CD8-positive, alpha-beta T cell (primary cell): ENCODE measurements at regions of chr12 and their contacts with region 1.

Region 1: GRCh38 chr12:44709166-44709565 is 166.9 kb downstream of the NELL2 start:
- DNase-seq: no peak
- ATAC-seq: no peak
- H3K4me3 ChIP-seq: no peak overlapping the region
- H3K4me3 Mint-ChIP-seq: no peak overlapping the region
- H3K27ac ChIP-seq: no peak overlapping the region
- H3K27ac Mint-ChIP-seq: no peak overlapping the region
- H3K4me1 ChIP-seq: no peaks in the 10 kb centered on the region
- H3K4me1 Mint-ChIP-seq: peaks cover 22% of the 10 kb centered on the region
- H3K27me3 ChIP-seq: no peaks in the 10 kb centered on the region
- H3K27me3 Mint-ChIP-seq: no peaks in the 10 kb centered on the region
- CTCF ChIP-seq: no peak

Region 2: GRCh38 chr12:44720265-44720664 is 11.1 kb after region 1 on chr12:
- CTCF ChIA-PET with region 1: interaction called, 3 read pairs
- POLR2A ChIA-PET with region 1: no interaction called
- intact Hi-C with region 1: loop called in 1 of 2 experiments (anchors 2 kb)
- DNase-seq: no peak
- ATAC-seq: no peak
- H3K4me3 ChIP-seq: no peak overlapping the region
- H3K4me3 Mint-ChIP-seq: no peak overlapping the region
- H3K27ac ChIP-seq: no peak overlapping the region
- H3K27ac Mint-ChIP-seq: peak overlapping the region; percentile 52
- H3K4me1 ChIP-seq: peaks cover 26% of the 10 kb centered on the region
- H3K4me1 Mint-ChIP-seq: peaks cover 74% of the 10 kb centered on the region
- H3K27me3 ChIP-seq: no peaks in the 10 kb centered on the region
- H3K27me3 Mint-ChIP-seq: no peaks in the 10 kb centered on the region
- CTCF ChIP-seq: no peak

Region 3: DNA sequence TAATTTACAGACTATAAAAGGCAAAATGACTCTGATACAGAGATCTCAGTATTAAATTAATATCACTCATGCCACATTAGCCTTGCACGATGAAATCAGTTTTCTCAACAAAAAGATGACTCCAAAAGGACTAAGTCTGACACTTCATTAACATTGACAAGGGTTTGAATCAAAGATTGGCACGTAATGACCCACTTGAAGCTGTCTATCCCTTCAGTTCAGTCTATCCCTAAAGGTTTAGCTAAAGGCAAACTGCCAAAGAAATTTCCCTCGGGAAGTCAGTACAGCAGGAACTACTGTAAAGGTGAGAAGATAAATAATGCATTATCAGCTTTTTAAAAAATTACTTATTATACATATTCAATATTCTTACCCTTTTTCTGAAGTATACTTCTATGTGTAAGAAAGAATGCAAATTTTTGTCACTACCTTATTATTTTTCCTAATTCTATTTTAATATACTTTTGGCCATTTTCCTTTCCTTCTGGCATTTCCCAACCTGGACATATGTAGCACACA is 39.8 kb after region 1 on chr12:
- CTCF ChIA-PET with region 1: no interaction called
- POLR2A ChIA-PET with region 1: no interaction called
- intact Hi-C with region 1: no loop called
- DNase-seq: no peak
- ATAC-seq: no peak
- H3K4me3 ChIP-seq: no peak overlapping the region
- H3K4me3 Mint-ChIP-seq: no peak overlapping the region
- H3K27ac ChIP-seq: no peak overlapping the region
- H3K27ac Mint-ChIP-seq: no peak overlapping the region
- H3K4me1 ChIP-seq: peaks cover 15% of the 10 kb centered on the region
- H3K4me1 Mint-ChIP-seq: peaks cover 43% of the 10 kb centered on the region
- H3K27me3 ChIP-seq: no peaks in the 10 kb centered on the region
- H3K27me3 Mint-ChIP-seq: no peaks in the 10 kb centered on the region
- CTCF ChIP-seq: no peak

Region 4: DNA sequence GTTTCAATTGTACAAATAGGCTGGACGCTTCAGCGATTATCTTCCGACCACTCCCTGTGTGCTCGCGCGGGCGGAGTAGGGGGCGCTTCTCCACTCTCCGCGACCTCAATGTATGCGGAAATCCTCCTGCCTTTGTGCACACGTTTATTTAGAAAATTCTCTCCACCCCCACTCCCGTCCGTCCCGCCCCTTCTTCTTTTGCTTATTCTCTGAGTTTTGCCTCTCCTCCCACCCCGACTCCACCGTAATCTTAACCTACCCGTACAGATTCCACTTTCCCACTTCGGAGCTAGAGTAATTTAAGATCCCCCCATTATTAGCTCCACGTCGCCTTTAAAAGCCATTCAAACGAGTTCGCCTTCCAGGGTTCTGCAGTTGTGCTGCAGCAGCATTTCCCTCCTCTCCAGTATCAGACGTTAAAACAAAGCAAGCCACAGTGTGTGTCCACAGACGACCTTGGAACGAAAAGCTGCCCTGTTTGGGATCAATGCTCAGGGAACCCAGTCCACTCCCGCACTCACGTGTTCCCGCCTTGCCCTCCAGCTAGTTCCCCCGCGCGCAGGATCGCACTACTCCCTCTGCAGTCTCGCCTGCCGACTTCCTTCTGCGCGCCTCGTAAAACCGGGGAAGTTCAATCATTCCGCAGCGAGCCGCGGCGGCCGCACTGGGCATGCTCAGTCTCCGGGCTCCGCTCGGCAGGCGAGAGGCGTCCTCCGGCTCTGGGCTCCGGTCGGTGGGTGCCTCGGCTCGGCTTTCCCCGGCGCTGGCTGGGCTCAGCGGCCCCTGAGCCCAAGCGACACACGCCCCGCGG is 506.5 kb after region 1 on chr12 and contains the start of gene ANO6:
- CTCF ChIA-PET with region 1: no interaction called
- POLR2A ChIA-PET with region 1: no interaction called
- intact Hi-C with region 1: no loop called
- DNase-seq: peak; percentile 37 to 87 (median 72)
- ATAC-seq: peak; percentile 74
- H3K4me3 ChIP-seq: peak within 1 kb of the TSS; percentile 79 to 89
- H3K4me3 Mint-ChIP-seq: peak within 1 kb of the TSS; percentile 94
- H3K27ac ChIP-seq: peak within 1 kb of the TSS; percentile 51 to 78
- H3K27ac Mint-ChIP-seq: peak within 1 kb of the TSS; percentile 92
- H3K4me1 ChIP-seq: peaks cover 24% of the 10 kb centered on the region
- H3K4me1 Mint-ChIP-seq: peaks cover 45% of the 10 kb centered on the region
- H3K27me3 ChIP-seq: no peaks in the 10 kb centered on the region
- H3K27me3 Mint-ChIP-seq: no peaks in the 10 kb centered on the region
- CTCF ChIP-seq: no peak
- total RNA-seq, gene ANO6: 7.4 to 7.5 TPM